Cardiac septum (tissue), 1 donor: ENCODE measurements at regions of chr4 and their contacts with region 1.

Region 1: DNA sequence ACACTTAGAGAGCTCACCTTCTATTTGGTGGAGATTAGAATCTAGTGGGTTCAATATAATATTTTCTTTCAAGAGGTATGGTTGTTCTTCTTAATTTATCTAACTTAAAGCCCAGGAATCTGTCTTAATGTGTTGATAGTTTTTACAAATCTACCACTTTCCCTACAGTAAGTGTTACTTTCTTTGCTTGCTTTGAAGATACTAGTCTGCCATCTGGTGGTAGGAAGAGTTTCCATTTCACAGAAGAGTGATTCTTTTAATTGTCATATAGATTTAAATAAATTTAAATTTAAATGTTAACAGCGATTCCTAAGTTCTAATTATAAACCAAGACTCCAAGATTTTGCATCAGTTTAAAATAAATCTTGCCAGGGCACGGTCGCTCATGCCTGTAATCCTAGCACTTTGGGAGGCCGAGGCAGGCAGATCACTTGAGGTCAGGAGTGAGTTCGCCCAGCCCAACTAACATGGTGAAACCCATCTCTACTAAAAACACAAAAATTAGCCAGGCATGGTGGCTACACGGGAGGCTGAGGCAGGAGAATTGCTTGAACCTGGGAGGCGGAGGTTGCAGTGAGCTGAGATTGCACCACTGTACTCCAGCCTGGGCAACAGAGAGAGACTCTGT is 43.5 kb downstream of the NUDT9 start:
- DNase-seq: no peak

Region 2: DNA sequence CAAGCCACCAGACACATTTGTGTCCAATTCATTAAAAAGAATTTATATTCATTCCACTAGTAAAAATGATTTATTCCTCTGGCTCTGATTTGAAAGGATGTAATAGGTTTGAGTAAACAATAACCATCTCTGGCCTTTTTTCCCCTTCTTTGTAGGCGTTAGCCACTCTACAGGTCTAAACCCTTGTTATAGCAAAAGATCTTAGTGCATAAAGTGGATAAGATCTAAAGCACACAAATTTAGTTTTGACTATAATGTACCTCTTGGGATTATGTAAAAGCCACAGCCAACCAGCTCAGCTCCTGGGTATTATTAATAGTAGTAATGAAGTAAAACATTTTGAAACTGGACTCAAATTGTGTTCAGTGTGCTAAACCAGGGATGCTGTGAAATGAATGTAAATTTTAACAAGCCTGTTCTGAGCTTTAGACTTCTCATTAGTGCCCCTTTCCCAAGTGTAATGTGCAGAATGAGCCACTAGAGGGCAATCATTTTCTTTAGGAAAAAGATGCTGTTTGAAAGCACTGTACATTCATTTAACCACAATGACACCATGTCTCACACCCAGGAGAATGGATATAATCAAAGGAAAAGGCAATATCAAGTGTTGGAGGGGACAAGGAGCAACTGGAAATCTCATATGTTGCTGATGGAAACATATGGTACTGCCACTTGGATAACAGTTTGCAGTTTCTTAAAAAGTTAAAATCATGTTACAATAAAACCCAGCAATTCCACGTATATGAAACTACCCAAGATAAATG is 315.2 kb before region 1 on chr4:
- intact Hi-C with region 1: loop called (anchors 10 kb)
- DNase-seq: no peak

Region 3: DNA sequence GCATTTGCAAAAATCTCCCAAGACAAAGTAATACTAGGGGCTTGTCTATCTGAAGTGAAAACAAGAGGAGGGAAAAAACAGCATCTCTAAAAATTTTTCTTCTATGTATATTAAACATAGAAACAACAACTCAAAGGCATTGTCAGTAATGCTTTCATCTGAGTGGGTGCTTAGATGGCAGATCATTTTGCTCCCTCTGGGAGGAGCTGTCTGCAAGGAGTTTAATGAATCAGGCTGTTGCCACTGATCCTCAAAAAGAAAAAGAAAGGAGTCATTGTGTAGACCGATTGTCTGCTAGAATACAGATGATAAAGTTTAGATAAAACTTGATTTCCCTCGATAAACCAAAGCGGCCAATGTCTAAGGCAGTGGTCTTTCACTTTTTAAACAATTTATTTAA is 195.7 kb before region 1 on chr4:
- intact Hi-C with region 1: loop called (anchors 5 kb)
- DNase-seq: no peak

Region 4: DNA sequence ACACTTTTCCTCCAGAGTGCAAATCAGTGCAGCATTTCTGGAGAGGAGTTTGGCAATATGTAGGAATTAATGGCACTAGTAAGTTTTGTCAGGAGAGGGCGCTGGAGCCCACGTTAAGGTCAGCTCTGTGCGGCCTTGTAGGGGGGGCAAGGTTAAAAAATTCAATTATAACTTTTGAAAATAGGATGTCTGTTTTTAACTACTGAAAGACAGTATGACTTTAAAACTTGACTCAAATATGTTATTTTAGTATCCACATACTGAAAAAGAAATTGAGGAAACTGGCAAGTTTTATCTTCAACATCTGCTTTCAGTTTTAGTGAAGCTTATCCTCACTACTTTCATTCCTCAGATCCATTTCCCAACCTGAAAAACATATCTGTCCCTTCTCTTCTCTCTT is 112.3 kb before region 1 on chr4:
- intact Hi-C with region 1: loop called (anchors 5 kb)
- DNase-seq: no peak

Region 5: DNA sequence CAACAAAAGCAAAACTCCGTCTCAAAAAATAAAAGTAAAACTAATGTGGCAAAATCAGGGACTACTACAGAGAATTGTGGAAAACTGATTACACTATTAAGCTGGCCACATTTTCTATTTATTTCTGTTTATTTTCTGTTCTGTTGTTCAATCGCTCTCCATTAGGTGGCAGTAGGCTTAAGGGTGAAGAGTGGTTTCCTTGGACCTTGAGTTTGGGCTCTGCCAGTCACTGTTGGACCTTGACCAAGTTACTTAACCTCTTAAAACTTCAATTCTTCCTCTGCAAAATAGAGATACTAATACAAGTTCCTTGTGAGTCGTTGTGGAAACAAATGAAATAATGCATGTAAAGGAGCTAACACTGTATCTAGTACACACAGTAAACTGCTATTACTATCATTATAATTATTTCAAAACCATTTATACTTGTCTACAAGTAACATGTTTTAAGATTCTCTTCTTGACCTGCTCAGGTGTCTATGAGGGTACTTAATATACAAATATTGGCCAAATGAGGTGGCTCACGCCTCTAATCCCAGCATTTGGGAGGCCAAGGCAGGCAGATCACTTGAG is 90.0 kb before region 1 on chr4:
- intact Hi-C with region 1: loop called (anchors 2 kb)
- DNase-seq: no peak

Region 6: DNA sequence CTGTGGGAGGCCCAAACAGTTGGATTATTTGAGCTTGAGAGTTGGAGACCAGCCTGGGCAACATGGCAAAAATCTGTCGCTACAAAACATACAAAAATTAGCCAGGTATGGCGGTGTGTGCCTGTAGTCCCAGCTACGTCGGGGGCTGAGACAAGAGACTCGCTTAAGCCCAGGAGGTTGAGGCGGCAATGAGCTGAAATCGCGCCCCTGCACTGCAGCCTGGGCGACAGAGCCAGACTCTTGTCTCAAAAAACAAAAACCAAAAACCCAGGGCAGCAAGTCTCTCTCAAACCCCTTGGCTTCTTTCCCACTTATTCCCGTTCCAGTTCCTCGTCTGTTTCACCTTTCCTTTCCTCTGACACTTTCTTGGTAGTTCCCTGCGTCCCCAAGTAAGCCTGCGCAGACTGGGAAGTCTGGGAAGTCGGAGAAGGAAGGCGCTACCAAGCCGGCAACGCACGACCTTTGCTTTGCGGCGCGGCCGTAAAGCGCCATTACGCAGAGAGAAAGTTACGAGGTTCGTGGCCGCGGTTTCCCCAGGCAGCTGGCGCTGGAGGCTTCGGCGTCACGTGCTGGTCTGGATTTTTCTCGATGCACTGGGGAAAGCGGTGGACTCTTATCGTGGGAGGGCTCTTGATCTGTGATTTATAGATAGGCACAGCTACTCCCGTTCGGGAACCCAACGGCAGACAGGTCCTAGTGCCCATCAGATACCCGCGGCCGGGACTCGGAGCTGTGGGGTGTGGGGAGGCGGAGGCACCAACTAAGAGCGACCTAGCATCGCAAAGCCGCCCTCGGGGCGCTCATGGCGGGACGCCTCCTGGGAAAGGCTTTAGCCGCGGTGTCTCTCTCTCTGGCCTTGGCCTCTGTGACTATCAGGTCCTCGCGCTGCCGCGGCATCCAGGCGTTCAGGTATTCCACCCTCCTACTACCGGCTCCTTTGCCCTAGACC is 43.5 kb before region 1 on chr4 and contains the start of gene NUDT9:
- intact Hi-C with region 1: loop called (anchors 5 kb)
- DNase-seq: peak; percentile 96
- total RNA-seq, gene NUDT9: 21.5 TPM